ENCODE measurements at regions of chr5 and their contacts with region 1.

Region 1: GRCh38 chr5:119743927-119744326 is 114.6 kb downstream of the FAM170A start:
- DNase-seq: peak; percentile 1 to 26 (median 3)
- H3K4me3 ChIP-seq: no peak overlapping the region
- H3K4me3 Mint-ChIP-seq: no peak overlapping the region
- H3K27ac ChIP-seq: no peak overlapping the region
- H3K27ac Mint-ChIP-seq: peak overlapping the region in 1 of 7 donors; percentile 3
- H3K4me1 ChIP-seq: no peaks in the 10 kb centered on the region
- H3K4me1 Mint-ChIP-seq: peaks cover 3% of the 10 kb centered on the region
- H3K27me3 ChIP-seq: no peaks in the 10 kb centered on the region
- H3K27me3 Mint-ChIP-seq: peaks cover 2% of the 10 kb centered on the region in 3 donors
- CTCF ChIP-seq: peak; percentile 47

Region 2: GRCh38 chr5:119578937-119579336 is 165.0 kb before region 1 on chr5:
- intact Hi-C with region 1: loop called in 1 of 2 experiments (anchors 5 kb)
- DNase-seq: peak; percentile 21 to 35 (median 25)
- H3K4me3 ChIP-seq: no peak overlapping the region
- H3K4me3 Mint-ChIP-seq: no peak overlapping the region
- H3K27ac ChIP-seq: no peak overlapping the region
- H3K27ac Mint-ChIP-seq: no peak overlapping the region
- H3K4me1 ChIP-seq: no peaks in the 10 kb centered on the region
- H3K4me1 Mint-ChIP-seq: no peaks in the 10 kb centered on the region
- H3K27me3 ChIP-seq: no peaks in the 10 kb centered on the region
- H3K27me3 Mint-ChIP-seq: peaks cover 3 to 4% (median 4%) of the 10 kb centered on the region in 3 donors
- CTCF ChIP-seq: peak; percentile 49